B cell (primary cell): ENCODE measurements at regions of chr3 and their contacts with region 1.

Region 1: DNA sequence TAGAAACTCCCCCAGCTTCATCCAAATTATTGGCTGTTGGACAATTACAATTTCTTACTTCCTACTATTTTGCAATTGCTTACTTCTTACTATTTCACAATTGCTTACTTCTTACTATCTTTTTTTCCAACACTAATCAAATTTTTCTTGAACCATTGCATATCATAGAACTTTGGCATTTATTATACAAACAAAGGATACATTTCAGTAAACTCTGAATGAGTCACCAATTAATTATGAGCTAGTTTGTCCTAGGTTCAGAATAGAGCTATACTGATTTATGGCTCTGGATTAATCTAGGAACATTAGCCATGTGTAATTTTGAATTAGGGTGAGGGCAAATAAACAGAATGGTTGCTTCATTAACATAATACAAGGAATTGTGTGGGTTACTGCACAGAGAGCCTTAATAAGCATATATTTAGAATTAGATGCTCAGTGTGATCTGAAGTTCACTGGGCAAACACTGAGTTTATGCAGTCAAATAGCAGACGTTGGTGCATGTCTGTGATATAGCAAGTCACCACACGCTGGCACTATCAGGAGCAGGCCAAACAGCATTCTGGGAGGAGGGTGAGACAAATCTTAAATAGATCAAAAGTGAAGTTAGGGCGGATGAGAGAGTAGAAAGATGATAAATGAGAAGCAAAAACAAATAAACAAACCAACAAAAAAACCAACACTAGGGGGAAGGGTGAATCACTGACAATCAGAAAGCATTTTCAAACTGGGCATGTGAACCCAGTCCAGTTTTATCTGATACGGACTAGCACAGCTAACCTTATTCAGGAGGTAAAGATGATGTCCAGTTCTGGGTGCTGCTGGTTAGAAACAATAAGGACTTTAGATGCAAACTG is 21.5 kb downstream of the GABRR3 start:
- DNase-seq: no peak
- ATAC-seq: no peak
- H3K4me3 ChIP-seq: no peak overlapping the region
- H3K4me3 Mint-ChIP-seq: no peak overlapping the region
- H3K27ac ChIP-seq: no peak overlapping the region
- H3K27ac Mint-ChIP-seq: no peak overlapping the region
- H3K4me1 ChIP-seq: no peaks in the 10 kb centered on the region
- H3K4me1 Mint-ChIP-seq: no peaks in the 10 kb centered on the region
- H3K27me3 ChIP-seq: no peaks in the 10 kb centered on the region
- H3K27me3 Mint-ChIP-seq: peaks cover 22% of the 10 kb centered on the region
- CTCF ChIP-seq: no peak

Region 2: DNA sequence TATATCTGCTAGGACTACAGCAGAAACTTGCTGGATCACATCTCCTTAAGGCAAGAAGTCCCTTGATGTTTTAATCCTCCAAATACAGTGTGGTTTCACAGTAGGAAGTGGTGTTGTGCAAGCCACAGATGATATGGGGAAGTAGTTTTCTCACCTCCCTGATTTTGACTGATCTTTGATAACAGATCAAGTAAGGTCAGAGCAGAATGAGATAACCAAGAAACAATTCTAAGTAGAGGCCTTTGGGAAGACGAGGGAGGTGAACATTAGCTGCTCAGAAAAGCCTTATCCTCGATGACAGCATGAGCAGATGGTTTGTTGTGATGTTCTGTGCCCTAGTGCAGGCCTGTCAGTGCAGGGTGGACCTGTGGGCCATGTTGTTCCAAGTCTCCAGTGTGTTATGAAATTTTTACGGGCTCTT is 102.7 kb before region 1 on chr3:
- CTCF ChIA-PET with region 1: no interaction called
- POLR2A ChIA-PET with region 1: no interaction called
- intact Hi-C with region 1: loop called (anchors 5 kb)
- DNase-seq: peak; percentile 24
- ATAC-seq: no peak
- H3K4me3 ChIP-seq: peak overlapping the region in 2 of 5 experiments; percentile 17 to 35
- H3K4me3 Mint-ChIP-seq: no peak overlapping the region
- H3K27ac ChIP-seq: peak overlapping the region in 1 of 2 donors; percentile 48
- H3K27ac Mint-ChIP-seq: peak overlapping the region; percentile 16
- H3K4me1 ChIP-seq: peaks cover 6 to 8% of the 10 kb centered on the region in 2 donors
- H3K4me1 Mint-ChIP-seq: peaks cover 4% of the 10 kb centered on the region
- H3K27me3 ChIP-seq: no peaks in the 10 kb centered on the region
- H3K27me3 Mint-ChIP-seq: no peaks in the 10 kb centered on the region
- CTCF ChIP-seq: no peak

Region 3: GRCh38 chr3:97991293-97991682 is 22.4 kb before region 1 on chr3:
- CTCF ChIA-PET with region 1: no interaction called
- POLR2A ChIA-PET with region 1: no interaction called
- intact Hi-C with region 1: no loop called
- DNase-seq: no peak
- ATAC-seq: no peak
- H3K4me3 ChIP-seq: no peak overlapping the region
- H3K4me3 Mint-ChIP-seq: no peak overlapping the region
- H3K27ac ChIP-seq: no peak overlapping the region
- H3K27ac Mint-ChIP-seq: no peak overlapping the region
- H3K4me1 ChIP-seq: no peaks in the 10 kb centered on the region
- H3K4me1 Mint-ChIP-seq: no peaks in the 10 kb centered on the region
- H3K27me3 ChIP-seq: no peaks in the 10 kb centered on the region
- H3K27me3 Mint-ChIP-seq: peaks cover 16% of the 10 kb centered on the region
- CTCF ChIP-seq: no peak

Region 4: DNA sequence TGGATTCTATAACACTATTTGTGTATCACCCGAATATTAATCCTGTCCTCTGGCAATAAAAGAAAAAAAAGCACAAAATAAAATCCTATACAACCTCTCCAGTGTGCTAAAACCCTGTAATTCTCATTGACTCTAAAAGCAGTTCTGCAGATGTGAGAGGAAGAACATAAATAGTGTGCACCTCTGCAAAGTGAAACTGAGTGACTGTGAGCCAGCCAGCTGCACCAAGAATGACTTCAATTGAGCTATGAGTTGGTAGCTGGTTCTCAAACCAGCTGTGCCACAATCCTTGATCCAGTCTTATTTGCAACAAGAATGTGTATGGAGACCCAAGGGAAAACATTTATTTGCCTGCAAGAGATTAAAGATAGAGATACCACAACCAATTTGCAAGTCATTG is 1593.5 kb after region 1 on chr3:
- CTCF ChIA-PET with region 1: no interaction called
- POLR2A ChIA-PET with region 1: no interaction called
- intact Hi-C with region 1: no loop called
- DNase-seq: no peak
- ATAC-seq: no peak
- H3K4me3 ChIP-seq: no peak overlapping the region
- H3K4me3 Mint-ChIP-seq: no peak overlapping the region
- H3K27ac ChIP-seq: no peak overlapping the region
- H3K27ac Mint-ChIP-seq: no peak overlapping the region
- H3K4me1 ChIP-seq: no peaks in the 10 kb centered on the region
- H3K4me1 Mint-ChIP-seq: no peaks in the 10 kb centered on the region
- H3K27me3 ChIP-seq: no peaks in the 10 kb centered on the region
- H3K27me3 Mint-ChIP-seq: no peaks in the 10 kb centered on the region
- CTCF ChIP-seq: no peak